ENCODE measurements at regions of chr9 and their contacts with region 1.

Region 1: GRCh38 chr9:137605121-137606004 is at the start of gene ARRDC1:
- DNase-seq: peak; percentile 87 to 98 (median 94)
- ATAC-seq: peak; percentile 89
- H3K4me3 ChIP-seq: peak within 1 kb of the TSS; percentile 58
- H3K4me3 Mint-ChIP-seq: peak within 1 kb of the TSS; percentile 88
- H3K27ac ChIP-seq: no peak within 1 kb of the TSS
- H3K27ac Mint-ChIP-seq: peak within 1 kb of the TSS; percentile 47
- H3K4me1 ChIP-seq: peaks cover 31% of the 10 kb centered on the region
- H3K4me1 Mint-ChIP-seq: peaks cover 22% of the 10 kb centered on the region
- H3K27me3 ChIP-seq: no peaks in the 10 kb centered on the region
- H3K27me3 Mint-ChIP-seq: no peaks in the 10 kb centered on the region
- CTCF ChIP-seq: no peak
- total RNA-seq, gene ARRDC1: 45.5 to 50.7 TPM

Region 2: DNA sequence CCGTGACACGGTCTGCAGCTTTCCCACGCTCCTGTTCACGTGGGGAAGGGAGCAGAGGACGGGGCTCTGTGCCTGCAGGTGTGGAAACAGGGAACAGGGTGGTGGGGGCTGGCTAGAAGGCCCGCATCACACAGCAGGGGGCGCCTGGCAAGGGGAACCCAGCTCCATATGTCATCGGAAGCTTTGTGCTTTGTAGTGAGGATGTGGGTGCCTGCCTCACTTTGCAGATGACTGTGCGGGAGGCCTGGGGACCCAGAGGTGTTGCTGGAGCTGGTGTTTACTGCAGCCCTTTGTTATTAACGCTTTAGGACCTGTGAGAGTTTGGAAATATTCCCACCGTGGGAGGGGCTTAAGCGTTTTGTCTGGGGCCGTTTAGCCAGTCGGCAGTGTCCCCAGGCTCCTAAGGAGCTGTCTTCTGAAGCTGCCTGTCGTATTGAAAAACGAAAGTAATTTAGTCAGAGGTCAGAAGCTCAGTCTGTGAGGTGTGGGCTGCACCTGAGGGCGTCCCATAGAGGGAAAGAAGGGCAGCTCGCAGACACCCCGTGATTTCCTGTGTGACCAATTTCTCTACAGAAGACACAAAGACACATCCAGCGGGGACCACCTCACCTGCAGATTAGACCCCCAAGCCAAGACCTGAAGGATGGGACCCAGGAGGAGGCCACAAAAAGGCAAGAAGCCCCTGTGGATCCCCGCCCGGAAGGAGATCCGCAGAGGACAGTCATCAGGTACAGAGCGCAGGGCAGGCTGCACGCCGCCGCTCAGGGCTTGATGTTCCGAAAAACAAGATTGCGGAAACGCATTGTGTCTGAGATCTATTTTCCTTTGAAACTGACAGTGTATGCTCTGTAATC is 509.5 kb before region 1 on chr9:
- CTCF ChIA-PET with region 1: no interaction called
- POLR2A ChIA-PET with region 1: no interaction called
- intact Hi-C with region 1: loop called in 1 of 2 experiments (anchors 10 kb)
- DNase-seq: peak; percentile 78 to 95 (median 85)
- ATAC-seq: peak; percentile 98
- H3K4me3 ChIP-seq: peak overlapping the region; percentile 42
- H3K4me3 Mint-ChIP-seq: peak overlapping the region; percentile 86
- H3K27ac ChIP-seq: peak overlapping the region; percentile 59 to 85
- H3K27ac Mint-ChIP-seq: peak overlapping the region; percentile 92
- H3K4me1 ChIP-seq: peaks cover 28% of the 10 kb centered on the region
- H3K4me1 Mint-ChIP-seq: peaks cover 22% of the 10 kb centered on the region
- H3K27me3 ChIP-seq: no peaks in the 10 kb centered on the region
- H3K27me3 Mint-ChIP-seq: no peaks in the 10 kb centered on the region
- CTCF ChIP-seq: peak; percentile 80

Region 3: DNA sequence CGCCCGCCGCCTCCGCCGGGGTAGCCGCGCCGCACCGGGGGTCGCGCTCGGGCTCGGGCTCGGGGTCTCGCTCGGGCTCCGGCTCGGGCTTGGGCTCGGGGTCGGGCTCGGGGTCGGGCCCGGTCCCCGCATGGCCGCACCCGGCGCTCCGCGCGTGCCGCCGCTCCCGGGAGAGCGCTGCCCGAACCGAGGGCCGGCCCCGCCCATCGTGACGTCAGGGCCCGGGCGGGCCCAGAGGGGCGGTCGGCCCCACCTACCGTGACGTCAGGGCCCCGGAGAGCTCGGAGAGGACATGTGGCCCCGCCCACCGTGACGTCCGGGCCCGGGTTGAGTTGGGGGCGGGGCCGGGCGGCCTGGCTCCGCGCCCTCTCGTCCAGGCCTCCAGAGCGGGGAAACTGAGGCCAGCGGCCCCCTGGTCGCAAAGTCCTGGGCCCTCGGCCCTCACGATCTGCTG is 146.2 kb before region 1 on chr9 and contains the start of gene NSMF:
- CTCF ChIA-PET with region 1: no interaction called
- POLR2A ChIA-PET with region 1: no interaction called
- intact Hi-C with region 1: loop called in 1 of 2 experiments (anchors 5 kb)
- DNase-seq: peak; percentile 88 to 98 (median 94)
- ATAC-seq: peak; percentile 67
- H3K4me3 ChIP-seq: peak within 1 kb of the TSS; percentile 57
- H3K4me3 Mint-ChIP-seq: peak within 1 kb of the TSS; percentile 77
- H3K27ac ChIP-seq: peak within 1 kb of the TSS; percentile 77 to 79
- H3K27ac Mint-ChIP-seq: peak within 1 kb of the TSS; percentile 95
- H3K4me1 ChIP-seq: peaks cover 86% of the 10 kb centered on the region
- H3K4me1 Mint-ChIP-seq: peaks cover 46% of the 10 kb centered on the region
- H3K27me3 ChIP-seq: no peaks in the 10 kb centered on the region
- H3K27me3 Mint-ChIP-seq: no peaks in the 10 kb centered on the region
- CTCF ChIP-seq: no peak
- total RNA-seq, gene NSMF: 104 to 109 TPM

Region 4: GRCh38 chr9:137551651-137552384 is 53.5 kb before region 1 on chr9 and contains the start of gene MRPL41:
- CTCF ChIA-PET with region 1: no interaction called
- POLR2A ChIA-PET with region 1: no interaction called
- intact Hi-C with region 1: loop called in 1 of 2 experiments (anchors 1 kb)
- DNase-seq: peak; percentile 71 to 97 (median 86)
- ATAC-seq: peak; percentile 80
- H3K4me3 ChIP-seq: peak within 1 kb of the TSS; percentile 67
- H3K4me3 Mint-ChIP-seq: peak within 1 kb of the TSS; percentile 91
- H3K27ac ChIP-seq: peak within 1 kb of the TSS; percentile 64 to 72
- H3K27ac Mint-ChIP-seq: peak within 1 kb of the TSS; percentile 82
- H3K4me1 ChIP-seq: peaks cover 18% of the 10 kb centered on the region
- H3K4me1 Mint-ChIP-seq: peaks cover 16% of the 10 kb centered on the region
- H3K27me3 ChIP-seq: no peaks in the 10 kb centered on the region
- H3K27me3 Mint-ChIP-seq: no peaks in the 10 kb centered on the region
- CTCF ChIP-seq: no peak
- total RNA-seq, gene MRPL41: 49.3 to 52.5 TPM

Region 5: GRCh38 chr9:137590462-137591383 is 14.6 kb before region 1 on chr9 and contains the start of gene ZMYND19:
- CTCF ChIA-PET with region 1: no interaction called
- POLR2A ChIA-PET with region 1: interaction called, 8 read pairs
- intact Hi-C with region 1: loop called in 1 of 2 experiments (anchors 1 kb)
- DNase-seq: peak; percentile 79 to 97 (median 90)
- ATAC-seq: peak; percentile 97
- H3K4me3 ChIP-seq: peak within 1 kb of the TSS; percentile 61
- H3K4me3 Mint-ChIP-seq: peak within 1 kb of the TSS; percentile 98
- H3K27ac ChIP-seq: no peak within 1 kb of the TSS
- H3K27ac Mint-ChIP-seq: peak within 1 kb of the TSS; percentile 59
- H3K4me1 ChIP-seq: peaks cover 21% of the 10 kb centered on the region
- H3K4me1 Mint-ChIP-seq: peaks cover 17% of the 10 kb centered on the region
- H3K27me3 ChIP-seq: no peaks in the 10 kb centered on the region
- H3K27me3 Mint-ChIP-seq: no peaks in the 10 kb centered on the region
- CTCF ChIP-seq: no peak
- total RNA-seq, gene ZMYND19: 8.6 to 11.3 TPM

Region 6: GRCh38 chr9:137618105-137619067 is 13.0 kb after region 1 on chr9 and contains the start of gene EHMT1:
- CTCF ChIA-PET with region 1: no interaction called
- POLR2A ChIA-PET with region 1: interaction called, 11 read pairs
- intact Hi-C with region 1: loop called (anchors 1 to 2 kb)
- DNase-seq: peak; percentile 75 to 97 (median 90)
- ATAC-seq: peak; percentile 82
- H3K4me3 ChIP-seq: peak within 1 kb of the TSS; percentile 95
- H3K4me3 Mint-ChIP-seq: peak within 1 kb of the TSS; percentile 95
- H3K27ac ChIP-seq: peak within 1 kb of the TSS; percentile 90 to 96
- H3K27ac Mint-ChIP-seq: peak within 1 kb of the TSS; percentile 93
- H3K4me1 ChIP-seq: peaks cover 37% of the 10 kb centered on the region
- H3K4me1 Mint-ChIP-seq: peaks cover 42% of the 10 kb centered on the region
- H3K27me3 ChIP-seq: no peaks in the 10 kb centered on the region
- H3K27me3 Mint-ChIP-seq: no peaks in the 10 kb centered on the region
- CTCF ChIP-seq: no peak
- total RNA-seq, gene EHMT1: 80.6 to 87.8 TPM

Measured in CD4-positive, alpha-beta T cell (primary cell).